Activated CD4-positive, alpha-beta memory T cell treated with anti-CD3 and anti-CD28 coated beads for 36 hours (primary cell): ENCODE measurements at regions of chrX and their contacts with region 1.

Region 1: DNA sequence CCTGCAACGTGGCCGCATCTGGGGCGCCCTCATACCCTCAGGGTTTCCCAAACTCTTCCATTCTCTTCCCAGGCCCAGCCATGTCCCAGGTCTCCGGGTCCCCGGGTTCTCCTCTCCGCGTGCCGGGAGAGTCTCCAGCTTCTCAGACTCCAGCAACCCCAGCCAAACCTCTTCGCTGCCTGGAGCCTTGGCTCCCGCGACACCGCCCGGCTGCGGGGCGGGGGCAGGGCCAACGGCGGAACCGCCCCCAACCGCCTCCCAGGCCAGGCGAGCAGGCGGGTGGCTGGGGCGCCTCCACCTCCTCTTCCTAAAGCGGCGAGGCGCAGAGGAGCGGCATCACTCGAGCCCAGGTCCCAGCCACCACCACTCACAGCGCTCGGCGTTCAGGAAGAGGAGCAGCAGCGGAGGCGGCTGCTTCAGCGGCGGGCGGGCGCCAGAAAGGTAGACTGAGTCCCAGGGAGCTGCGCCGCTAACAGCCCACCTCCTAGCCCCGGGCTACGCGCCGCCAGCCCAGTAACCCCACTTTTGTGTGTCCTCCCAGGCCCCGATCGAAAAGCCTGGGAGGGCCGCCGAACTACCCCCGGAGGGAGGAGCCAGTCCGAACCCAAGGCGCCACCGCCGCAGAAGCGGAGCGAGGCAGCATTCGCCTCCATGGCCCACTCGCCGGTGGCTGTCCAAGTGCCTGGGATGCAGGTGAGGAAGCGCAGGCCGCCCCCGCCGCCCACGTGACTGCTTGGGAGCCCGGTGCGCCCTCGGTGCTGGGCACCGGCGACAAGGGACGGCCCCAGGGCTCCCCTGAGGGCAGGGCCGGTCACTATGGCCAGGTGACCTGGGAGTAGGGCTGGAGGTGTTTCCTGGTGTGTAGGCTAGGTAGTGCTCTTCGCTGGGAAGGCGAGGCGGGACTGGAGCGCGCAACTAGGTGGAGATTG is at the start of gene STK26:
- DNase-seq: peak; percentile 84
- H3K4me3 Mint-ChIP-seq: peak within 1 kb of the TSS; percentile 85
- H3K27ac Mint-ChIP-seq: peak within 1 kb of the TSS; percentile 94
- H3K4me1 Mint-ChIP-seq: peaks cover 29% of the 10 kb centered on the region
- H3K27me3 Mint-ChIP-seq: no peaks in the 10 kb centered on the region
- total RNA-seq, gene STK26: 60.9 to 64.0 TPM

Region 2: GRCh38 chrX:131841496-131842410 is 181.5 kb before region 1 on chrX:
- CTCF ChIA-PET with region 1: no interaction called
- POLR2A ChIA-PET with region 1: no interaction called
- intact Hi-C with region 1: loop called (anchors 1 kb)
- DNase-seq: peak; percentile 27
- H3K4me3 Mint-ChIP-seq: no peak overlapping the region
- H3K27ac Mint-ChIP-seq: no peak overlapping the region
- H3K4me1 Mint-ChIP-seq: no peaks in the 10 kb centered on the region
- H3K27me3 Mint-ChIP-seq: no peaks in the 10 kb centered on the region

Region 3: DNA sequence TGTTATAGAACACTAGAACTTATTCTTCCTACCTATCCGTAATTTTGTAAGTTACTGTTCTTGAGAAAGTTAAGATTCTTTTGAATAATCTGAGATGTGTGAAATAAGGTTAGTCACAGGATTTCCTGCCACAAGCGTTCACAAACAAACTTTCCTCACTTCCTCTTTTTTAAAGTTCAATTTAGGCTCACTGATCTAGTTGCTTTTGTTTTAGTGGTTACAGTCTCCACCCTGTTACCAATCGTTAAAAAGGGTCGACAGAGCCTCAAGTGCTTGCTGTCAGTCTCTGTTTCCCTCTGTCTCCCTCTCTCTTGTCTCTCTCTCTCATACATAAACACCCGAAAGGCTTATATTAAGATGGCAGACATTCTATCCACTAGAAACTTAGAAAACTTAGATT is 36.0 kb before region 1 on chrX:
- CTCF ChIA-PET with region 1: no interaction called
- POLR2A ChIA-PET with region 1: interaction called, 3 read pairs
- intact Hi-C with region 1: loop called (anchors 2 kb)
- DNase-seq: peak; percentile 9
- H3K4me3 Mint-ChIP-seq: peak overlapping the region; percentile 42
- H3K27ac Mint-ChIP-seq: peak overlapping the region; percentile 88
- H3K4me1 Mint-ChIP-seq: peaks cover 43% of the 10 kb centered on the region
- H3K27me3 Mint-ChIP-seq: no peaks in the 10 kb centered on the region

Region 4: GRCh38 chrX:132004708-132005107 is 18.5 kb before region 1 on chrX:
- CTCF ChIA-PET with region 1: no interaction called
- POLR2A ChIA-PET with region 1: no interaction called
- intact Hi-C with region 1: no loop called
- DNase-seq: no peak
- H3K4me3 Mint-ChIP-seq: no peak overlapping the region
- H3K27ac Mint-ChIP-seq: no peak overlapping the region
- H3K4me1 Mint-ChIP-seq: peaks cover 26% of the 10 kb centered on the region
- H3K27me3 Mint-ChIP-seq: no peaks in the 10 kb centered on the region

Region 5: GRCh38 chrX:132071260-132071659 is 48.0 kb after region 1 on chrX:
- CTCF ChIA-PET with region 1: interaction called, 4 read pairs
- POLR2A ChIA-PET with region 1: no interaction called
- intact Hi-C with region 1: loop called (anchors 5 kb)
- DNase-seq: no peak
- H3K4me3 Mint-ChIP-seq: no peak overlapping the region
- H3K27ac Mint-ChIP-seq: no peak overlapping the region
- H3K4me1 Mint-ChIP-seq: no peaks in the 10 kb centered on the region
- H3K27me3 Mint-ChIP-seq: no peaks in the 10 kb centered on the region

Region 6: GRCh38 chrX:132330117-132330729 is 307.0 kb after region 1 on chrX:
- CTCF ChIA-PET with region 1: no interaction called
- POLR2A ChIA-PET with region 1: no interaction called
- intact Hi-C with region 1: no loop called
- DNase-seq: no peak
- H3K4me3 Mint-ChIP-seq: no peak overlapping the region
- H3K27ac Mint-ChIP-seq: no peak overlapping the region
- H3K4me1 Mint-ChIP-seq: peaks cover 9% of the 10 kb centered on the region
- H3K27me3 Mint-ChIP-seq: no peaks in the 10 kb centered on the region

Region 7: GRCh38 chrX:132480581-132481203 is 457.5 kb after region 1 on chrX:
- CTCF ChIA-PET with region 1: no interaction called
- POLR2A ChIA-PET with region 1: no interaction called
- intact Hi-C with region 1: loop called (anchors 5 kb)
- DNase-seq: peak; percentile 55
- H3K4me3 Mint-ChIP-seq: peak overlapping the region; percentile 75
- H3K27ac Mint-ChIP-seq: peak overlapping the region; percentile 97
- H3K4me1 Mint-ChIP-seq: peaks cover 37% of the 10 kb centered on the region
- H3K27me3 Mint-ChIP-seq: no peaks in the 10 kb centered on the region